ENCODE measurements at regions of chr3 and their contacts with region 1.

Region 1: GRCh38 chr3:12994607-12995388 is 78.4 kb downstream of the IQSEC1 start:
- DNase-seq: peak; percentile 75 to 92 (median 83)
- ATAC-seq: peak; percentile 86
- H3K4me3 ChIP-seq: peak overlapping the region; percentile 92
- H3K4me3 Mint-ChIP-seq: peak overlapping the region; percentile 98
- H3K27ac ChIP-seq: peak overlapping the region; percentile 23 to 60
- H3K27ac Mint-ChIP-seq: peak overlapping the region; percentile 93
- H3K4me1 ChIP-seq: peaks cover 66% of the 10 kb centered on the region
- H3K4me1 Mint-ChIP-seq: peaks cover 79% of the 10 kb centered on the region
- H3K27me3 ChIP-seq: no peaks in the 10 kb centered on the region
- H3K27me3 Mint-ChIP-seq: no peaks in the 10 kb centered on the region
- CTCF ChIP-seq: peak; percentile 98

Region 2: DNA sequence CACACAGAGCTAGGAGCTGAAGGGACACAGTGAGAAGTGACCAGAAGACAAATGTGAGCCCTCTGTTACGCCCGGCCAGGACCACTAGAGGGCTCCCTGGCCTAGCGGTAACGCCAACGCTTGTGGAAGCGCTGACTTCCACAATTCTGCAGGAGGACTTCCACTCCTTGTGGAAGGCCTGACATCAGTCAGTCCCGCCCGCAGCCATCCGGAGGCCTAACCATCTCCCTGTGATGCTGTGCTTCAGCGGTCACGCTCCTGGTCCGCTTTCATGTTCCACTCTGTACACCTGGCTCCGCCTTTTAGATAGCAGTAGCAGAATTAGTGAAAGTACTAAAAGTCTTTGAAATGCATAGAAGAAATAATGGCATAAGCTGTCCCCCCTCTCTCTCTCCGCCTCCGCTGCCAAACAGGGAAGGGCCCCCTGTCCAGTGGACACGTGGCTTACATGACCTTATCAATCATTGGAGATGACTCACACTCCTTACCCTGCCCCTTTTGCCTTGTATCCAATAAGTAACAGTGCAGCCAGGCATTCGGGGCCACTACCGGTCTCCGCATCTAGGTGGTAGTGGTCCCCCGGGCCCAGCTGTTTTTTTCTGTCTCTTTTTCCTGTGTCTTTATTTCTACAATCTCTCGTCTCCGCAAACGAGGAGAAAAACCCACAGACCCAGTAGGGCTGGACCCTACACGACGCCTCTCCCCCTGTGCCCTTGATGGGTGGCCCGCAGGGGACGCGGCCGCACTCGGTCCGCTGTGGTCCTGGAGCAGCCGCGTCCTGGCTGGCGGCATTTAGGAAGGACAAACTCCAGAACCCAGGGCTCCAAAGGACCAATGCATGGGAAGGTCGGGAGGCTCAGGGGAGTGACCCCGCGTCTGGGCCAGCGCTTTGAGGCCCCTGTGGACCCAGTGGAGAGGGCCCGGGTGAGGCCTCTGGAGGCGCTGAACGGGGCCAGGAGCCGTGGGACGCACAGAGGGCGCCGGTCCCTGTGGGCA is 126.5 kb before region 1 on chr3:
- CTCF ChIA-PET with region 1: interaction called, 3 read pairs
- POLR2A ChIA-PET with region 1: no interaction called
- intact Hi-C with region 1: loop called in 1 of 2 experiments (anchors 5 kb)
- DNase-seq: peak in 13 of 14 experiments; percentile 12 to 78 (median 46)
- ATAC-seq: peak; percentile 82
- H3K4me3 ChIP-seq: peak overlapping the region; percentile 54
- H3K4me3 Mint-ChIP-seq: peak overlapping the region; percentile 90
- H3K27ac ChIP-seq: no peak overlapping the region
- H3K27ac Mint-ChIP-seq: no peak overlapping the region
- H3K4me1 ChIP-seq: peaks cover 26% of the 10 kb centered on the region
- H3K4me1 Mint-ChIP-seq: peaks cover 14% of the 10 kb centered on the region
- H3K27me3 ChIP-seq: peaks cover 9 to 15% of the 10 kb centered on the region in 2 experiments
- H3K27me3 Mint-ChIP-seq: peaks cover 40% of the 10 kb centered on the region
- CTCF ChIP-seq: peak; percentile 87

Region 3: DNA sequence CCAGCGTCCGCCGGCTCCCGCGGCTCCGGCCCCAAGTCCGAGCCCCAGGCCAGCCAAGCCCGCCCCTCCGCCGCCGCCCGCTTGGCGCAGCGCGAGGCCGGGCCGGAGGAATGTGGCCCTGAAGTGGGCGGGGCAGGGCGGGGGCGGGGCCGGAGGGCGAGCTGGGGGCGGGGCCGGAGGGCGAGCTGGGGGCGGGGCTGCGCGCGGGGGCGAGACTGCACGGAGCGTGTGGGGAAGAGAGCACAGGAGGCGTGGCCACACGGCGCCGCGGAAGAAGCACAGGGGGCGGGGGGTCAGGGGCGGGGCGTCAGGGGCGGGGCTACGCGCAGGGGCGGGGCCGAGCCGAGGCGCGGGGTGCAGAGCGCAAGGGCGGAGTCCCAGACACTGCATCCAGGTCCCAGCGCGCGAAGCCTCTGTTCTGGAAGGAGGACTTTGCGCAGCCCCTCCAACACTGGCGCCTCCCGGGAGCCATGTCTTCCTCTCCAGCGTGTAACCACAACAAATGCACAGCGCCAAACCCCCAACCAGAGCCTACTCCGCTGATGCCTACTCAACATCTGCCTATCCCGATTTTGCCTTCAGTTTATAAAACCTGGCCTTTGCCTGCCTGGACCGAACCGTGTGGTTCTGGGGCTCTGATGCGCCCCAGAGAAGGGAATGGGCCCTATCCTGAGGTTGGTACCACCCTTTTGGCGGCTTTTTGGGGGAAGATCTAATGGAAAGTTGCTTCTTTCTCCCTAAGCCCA is 27.0 kb before region 1 on chr3:
- CTCF ChIA-PET with region 1: interaction called, 12 read pairs
- POLR2A ChIA-PET with region 1: interaction called, 3 read pairs
- intact Hi-C with region 1: loop called in 1 of 2 experiments (anchors 2 kb)
- DNase-seq: peak; percentile 82 to 97 (median 88)
- ATAC-seq: peak; percentile 95
- H3K4me3 ChIP-seq: peak overlapping the region; percentile 47
- H3K4me3 Mint-ChIP-seq: peak overlapping the region; percentile 80
- H3K27ac ChIP-seq: no peak overlapping the region
- H3K27ac Mint-ChIP-seq: peak overlapping the region; percentile 67
- H3K4me1 ChIP-seq: peaks cover 65% of the 10 kb centered on the region
- H3K4me1 Mint-ChIP-seq: peaks cover 78% of the 10 kb centered on the region
- H3K27me3 ChIP-seq: no peaks in the 10 kb centered on the region
- H3K27me3 Mint-ChIP-seq: no peaks in the 10 kb centered on the region
- CTCF ChIP-seq: no peak

Region 4: DNA sequence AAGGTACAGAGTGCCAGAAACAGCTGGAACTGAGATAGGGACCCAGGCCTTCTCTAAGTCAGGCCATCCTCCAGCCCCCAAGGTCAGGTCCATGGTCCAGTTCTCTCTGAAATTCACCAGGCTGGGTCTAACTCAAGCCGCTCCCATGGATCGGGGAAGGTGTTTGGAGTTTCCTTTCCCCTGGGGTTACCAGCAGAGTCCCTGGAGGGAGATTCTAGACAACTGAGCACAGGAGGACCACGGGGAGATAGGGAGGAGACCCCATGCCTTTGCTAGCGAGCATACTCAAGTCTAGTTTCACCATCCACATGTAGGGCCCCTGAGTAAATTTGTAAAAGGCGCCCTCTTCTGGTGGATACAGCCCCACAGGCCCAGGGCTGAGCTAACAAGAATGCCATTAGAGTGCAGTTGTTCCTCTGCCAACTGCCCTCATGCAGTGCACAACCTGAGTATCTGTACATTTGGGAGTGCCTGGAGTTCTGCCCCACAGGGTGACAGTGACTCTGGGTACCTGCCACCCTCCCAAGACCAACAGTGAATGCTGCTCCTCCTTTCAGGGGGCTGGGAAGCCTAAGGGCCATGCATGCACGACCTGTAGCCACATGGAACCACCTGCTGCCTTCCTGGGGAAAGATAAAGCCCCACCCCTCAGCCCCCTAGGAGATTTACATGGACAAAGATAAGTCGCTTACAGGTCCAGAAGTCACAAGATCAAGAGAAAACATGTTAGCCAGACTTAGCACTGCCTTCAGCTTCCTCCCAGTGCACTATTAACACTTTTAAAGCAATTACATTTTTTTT is 10.6 kb before region 1 on chr3:
- CTCF ChIA-PET with region 1: interaction called, 20 read pairs
- POLR2A ChIA-PET with region 1: interaction called, 9 read pairs
- intact Hi-C with region 1: no loop called
- DNase-seq: peak; percentile 28 to 75 (median 44)
- ATAC-seq: peak; percentile 88
- H3K4me3 ChIP-seq: no peak overlapping the region
- H3K4me3 Mint-ChIP-seq: peak overlapping the region; percentile 35
- H3K27ac ChIP-seq: no peak overlapping the region
- H3K27ac Mint-ChIP-seq: peak overlapping the region; percentile 57
- H3K4me1 ChIP-seq: peaks cover 61% of the 10 kb centered on the region
- H3K4me1 Mint-ChIP-seq: peaks cover 71% of the 10 kb centered on the region
- H3K27me3 ChIP-seq: no peaks in the 10 kb centered on the region
- H3K27me3 Mint-ChIP-seq: no peaks in the 10 kb centered on the region
- CTCF ChIP-seq: peak; percentile 56

Region 5: GRCh38 chr3:13012228-13012691 is 17.5 kb after region 1 on chr3:
- CTCF ChIA-PET with region 1: interaction called, 59 read pairs
- POLR2A ChIA-PET with region 1: interaction called, 30 read pairs
- intact Hi-C with region 1: loop called (anchors 2 kb)
- DNase-seq: peak in 11 of 14 experiments; percentile 15 to 86 (median 30)
- ATAC-seq: no peak
- H3K4me3 ChIP-seq: peak overlapping the region; percentile 63
- H3K4me3 Mint-ChIP-seq: peak overlapping the region; percentile 84
- H3K27ac ChIP-seq: peak overlapping the region; percentile 87 to 99
- H3K27ac Mint-ChIP-seq: peak overlapping the region; percentile 98
- H3K4me1 ChIP-seq: peaks cover 100% of the 10 kb centered on the region
- H3K4me1 Mint-ChIP-seq: peaks cover 93% of the 10 kb centered on the region
- H3K27me3 ChIP-seq: no peaks in the 10 kb centered on the region
- H3K27me3 Mint-ChIP-seq: no peaks in the 10 kb centered on the region
- CTCF ChIP-seq: no peak

Region 6: GRCh38 chr3:13073326-13074005 is 78.7 kb after region 1 on chr3 and contains the start of gene IQSEC1:
- CTCF ChIA-PET with region 1: no interaction called
- POLR2A ChIA-PET with region 1: no interaction called
- intact Hi-C with region 1: loop called in 1 of 2 experiments (anchors 5 kb)
- DNase-seq: peak; percentile 26 to 88 (median 66)
- ATAC-seq: peak; percentile 69
- H3K4me3 ChIP-seq: peak within 1 kb of the TSS; percentile 44
- H3K4me3 Mint-ChIP-seq: peak within 1 kb of the TSS; percentile 83
- H3K27ac ChIP-seq: no peak within 1 kb of the TSS
- H3K27ac Mint-ChIP-seq: no peak within 1 kb of the TSS
- H3K4me1 ChIP-seq: peaks cover 41% of the 10 kb centered on the region
- H3K4me1 Mint-ChIP-seq: peaks cover 35% of the 10 kb centered on the region
- H3K27me3 ChIP-seq: peaks cover 17 to 20% of the 10 kb centered on the region in 2 experiments
- H3K27me3 Mint-ChIP-seq: peaks cover 26% of the 10 kb centered on the region
- CTCF ChIP-seq: no peak
- total RNA-seq, gene IQSEC1: 102 to 108 TPM

Region 7: GRCh38 chr3:13332158-13332557 is 337.4 kb after region 1 on chr3:
- CTCF ChIA-PET with region 1: no interaction called
- POLR2A ChIA-PET with region 1: no interaction called
- intact Hi-C with region 1: no loop called
- DNase-seq: no peak
- ATAC-seq: no peak
- H3K4me3 ChIP-seq: no peak overlapping the region
- H3K4me3 Mint-ChIP-seq: no peak overlapping the region
- H3K27ac ChIP-seq: no peak overlapping the region
- H3K27ac Mint-ChIP-seq: peak overlapping the region; percentile 78
- H3K4me1 ChIP-seq: peaks cover 7% of the 10 kb centered on the region
- H3K4me1 Mint-ChIP-seq: no peaks in the 10 kb centered on the region
- H3K27me3 ChIP-seq: no peaks in the 10 kb centered on the region
- H3K27me3 Mint-ChIP-seq: no peaks in the 10 kb centered on the region
- CTCF ChIP-seq: no peak

Measured in CD4-positive, alpha-beta T cell (primary cell).